ENCODE measurements at regions of chr9 and their contacts with region 1.

Region 1: DNA sequence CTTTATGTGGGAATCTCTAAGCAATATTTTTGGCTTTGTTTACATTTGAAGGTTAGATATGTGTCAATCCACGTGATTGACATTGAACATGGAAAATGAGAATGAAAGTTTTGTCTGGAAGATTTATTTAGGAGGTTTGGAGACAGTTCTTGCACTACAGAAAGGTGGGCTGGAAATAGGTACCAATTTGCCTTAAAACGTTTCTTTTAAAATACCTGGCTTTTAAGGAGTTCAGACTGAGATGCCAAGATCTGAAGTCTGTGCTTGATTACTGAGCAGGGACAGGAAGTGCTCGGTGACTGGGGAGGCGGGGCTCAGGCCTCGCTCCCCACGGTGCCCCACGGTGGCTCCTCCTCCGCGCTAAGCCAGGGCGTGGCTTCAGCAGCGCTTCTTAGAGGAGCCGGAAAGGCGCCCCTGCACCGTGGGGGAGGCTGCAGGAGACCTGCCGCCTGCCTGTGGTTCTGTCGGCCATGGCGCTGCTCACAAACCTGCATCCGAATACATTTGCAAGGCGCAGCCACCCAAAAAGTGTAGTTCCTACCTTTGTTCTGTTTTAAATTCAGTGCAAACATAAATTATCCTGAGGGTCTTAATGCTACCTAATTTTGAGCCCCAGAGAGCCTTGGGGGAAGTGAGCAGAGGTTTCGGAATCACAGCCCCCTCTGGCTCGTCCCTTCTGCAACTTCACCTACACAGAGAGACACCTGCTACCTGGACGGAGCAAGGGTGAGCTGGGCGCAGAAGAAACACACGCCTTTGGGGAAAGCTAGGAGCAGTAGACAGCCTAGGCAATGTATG is 49.2 kb downstream of the USP20 start:
- DNase-seq: peak; percentile 98
- H3K4me3 Mint-ChIP-seq: peak overlapping the region; percentile 92
- H3K27ac Mint-ChIP-seq: peak overlapping the region; percentile 99
- H3K4me1 Mint-ChIP-seq: peaks cover 41% of the 10 kb centered on the region
- H3K27me3 Mint-ChIP-seq: no peaks in the 10 kb centered on the region

Region 2: DNA sequence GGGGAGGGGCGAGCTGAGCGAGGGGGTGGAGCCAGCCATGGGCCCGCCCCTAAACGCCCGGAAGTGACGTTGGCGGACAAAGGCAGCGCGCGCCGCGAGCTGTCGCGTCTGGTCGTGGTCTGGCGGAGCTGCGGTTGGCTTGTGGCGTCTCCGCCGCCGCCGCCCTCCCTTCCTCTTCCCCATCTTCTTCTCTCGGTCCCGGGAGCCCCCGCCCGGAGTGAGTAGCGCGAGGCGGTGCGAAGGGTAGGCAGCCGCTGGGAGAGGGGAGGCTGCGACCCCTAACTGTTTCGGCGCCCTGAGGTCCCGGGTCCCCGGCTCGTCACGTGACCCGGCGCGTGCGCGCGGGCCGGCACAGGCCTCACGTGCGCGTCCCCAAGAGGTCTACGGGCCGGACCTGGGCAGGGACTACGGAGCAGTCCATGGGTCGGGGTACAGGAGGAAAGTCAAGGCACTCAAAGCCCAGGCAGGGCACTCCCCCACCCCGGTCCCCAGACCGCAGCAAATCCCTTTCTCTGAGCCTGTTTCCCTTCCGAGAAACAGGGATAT is 258.3 kb before region 1 on chr9 and contains the start of gene NTMT1:
- CTCF ChIA-PET with region 1: no interaction called
- intact Hi-C with region 1: loop called (anchors 1 kb)
- DNase-seq: peak; percentile 92
- H3K4me3 Mint-ChIP-seq: peak within 1 kb of the TSS; percentile 77
- H3K27ac Mint-ChIP-seq: peak within 1 kb of the TSS; percentile 93
- H3K4me1 Mint-ChIP-seq: peaks cover 59% of the 10 kb centered on the region
- H3K27me3 Mint-ChIP-seq: peaks cover 14% of the 10 kb centered on the region
- total RNA-seq, gene NTMT1: 58.6 to 59.3 TPM

Region 3: DNA sequence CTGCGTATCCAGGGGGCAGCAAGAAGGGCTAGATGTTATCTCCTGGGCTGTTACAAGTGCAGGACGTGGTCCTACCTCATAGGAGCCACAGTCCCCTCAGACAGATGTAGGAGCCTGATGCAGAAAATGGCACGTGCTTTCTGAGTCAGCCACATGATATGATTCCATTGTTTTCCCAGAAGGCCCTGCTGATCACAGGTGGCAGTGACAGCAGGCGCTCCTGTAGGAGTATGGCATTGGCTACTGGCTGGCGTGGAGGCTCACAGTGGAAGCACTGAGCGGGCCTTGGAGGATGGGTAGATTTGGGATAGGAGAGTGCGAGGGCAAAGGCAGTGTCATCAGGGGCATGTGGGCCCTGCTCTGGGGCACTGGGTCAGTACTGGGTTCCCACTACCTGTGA is 27.2 kb before region 1 on chr9:
- CTCF ChIA-PET with region 1: no interaction called
- intact Hi-C with region 1: no loop called
- DNase-seq: no peak
- H3K4me3 Mint-ChIP-seq: no peak overlapping the region
- H3K27ac Mint-ChIP-seq: no peak overlapping the region
- H3K4me1 Mint-ChIP-seq: peaks cover 57% of the 10 kb centered on the region
- H3K27me3 Mint-ChIP-seq: no peaks in the 10 kb centered on the region

Region 4: GRCh38 chr9:129868916-129869486 is 15.4 kb before region 1 on chr9:
- CTCF ChIA-PET with region 1: interaction called, 3 read pairs
- intact Hi-C with region 1: loop called (anchors 1 kb)
- DNase-seq: peak; percentile 96
- H3K4me3 Mint-ChIP-seq: peak overlapping the region; percentile 66
- H3K27ac Mint-ChIP-seq: peak overlapping the region; percentile 91
- H3K4me1 Mint-ChIP-seq: peaks cover 72% of the 10 kb centered on the region
- H3K27me3 Mint-ChIP-seq: no peaks in the 10 kb centered on the region

Region 5: GRCh38 chr9:129954868-129955550 is 70.6 kb after region 1 on chr9:
- CTCF ChIA-PET with region 1: interaction called, 7 read pairs
- intact Hi-C with region 1: loop called (anchors 1 kb)
- DNase-seq: no peak
- H3K4me3 Mint-ChIP-seq: no peak overlapping the region
- H3K27ac Mint-ChIP-seq: peak overlapping the region; percentile 13
- H3K4me1 Mint-ChIP-seq: peaks cover 49% of the 10 kb centered on the region
- H3K27me3 Mint-ChIP-seq: no peaks in the 10 kb centered on the region

Region 6: GRCh38 chr9:130029223-130029973 is 145.0 kb after region 1 on chr9:
- CTCF ChIA-PET with region 1: interaction called, 6 read pairs
- intact Hi-C with region 1: loop called (anchors 1 kb)
- DNase-seq: peak; percentile 68
- H3K4me3 Mint-ChIP-seq: peak overlapping the region; percentile 45
- H3K27ac Mint-ChIP-seq: peak overlapping the region; percentile 85
- H3K4me1 Mint-ChIP-seq: peaks cover 96% of the 10 kb centered on the region
- H3K27me3 Mint-ChIP-seq: no peaks in the 10 kb centered on the region

Region 7: DNA sequence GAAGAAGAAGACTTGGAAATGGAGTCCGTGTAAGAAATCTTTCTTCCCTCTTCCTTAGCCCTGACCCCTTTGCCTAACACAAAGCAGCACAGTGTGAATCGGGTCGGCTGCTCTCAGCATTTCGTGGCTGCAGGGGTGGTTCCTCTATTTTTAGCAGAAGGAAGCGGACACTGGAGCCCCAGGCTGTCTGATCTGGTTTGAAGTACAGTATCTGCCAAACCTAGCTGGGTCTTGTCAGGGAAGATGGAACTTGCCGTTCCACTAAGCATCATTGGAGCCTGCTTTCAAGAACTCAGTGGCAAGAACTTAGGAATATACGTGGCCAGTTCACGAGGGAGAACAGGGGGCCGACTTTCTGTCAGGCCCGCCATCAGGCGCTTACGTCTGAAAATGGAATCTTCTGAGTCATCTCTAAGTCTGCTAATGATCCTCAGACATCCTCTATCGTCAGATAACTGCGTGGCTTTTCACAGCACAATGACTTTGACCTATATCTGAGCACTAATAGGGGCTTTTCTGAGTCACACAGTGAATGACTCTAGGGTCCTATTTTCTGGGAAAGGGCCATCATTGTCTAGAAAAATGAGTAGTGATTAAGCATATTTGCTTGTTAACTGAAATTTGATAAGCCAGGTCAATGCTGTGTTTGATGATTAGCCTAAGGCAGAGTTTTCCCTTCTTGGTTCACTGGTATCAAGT is 244.5 kb after region 1 on chr9:
- CTCF ChIA-PET with region 1: no interaction called
- intact Hi-C with region 1: loop called (anchors 1 kb)
- DNase-seq: peak; percentile 76
- H3K4me3 Mint-ChIP-seq: peak overlapping the region; percentile 71
- H3K27ac Mint-ChIP-seq: peak overlapping the region; percentile 99
- H3K4me1 Mint-ChIP-seq: peaks cover 52% of the 10 kb centered on the region
- H3K27me3 Mint-ChIP-seq: no peaks in the 10 kb centered on the region